Activated CD4-positive, alpha-beta memory T cell treated with anti-CD3 and anti-CD28 coated beads, Interleukin-2, amount 10 ng/mL, durations not matched to agents 7 days and 5 days (primary cell): ENCODE measurements at regions of chr9 and their contacts with region 1.

Region 1: DNA sequence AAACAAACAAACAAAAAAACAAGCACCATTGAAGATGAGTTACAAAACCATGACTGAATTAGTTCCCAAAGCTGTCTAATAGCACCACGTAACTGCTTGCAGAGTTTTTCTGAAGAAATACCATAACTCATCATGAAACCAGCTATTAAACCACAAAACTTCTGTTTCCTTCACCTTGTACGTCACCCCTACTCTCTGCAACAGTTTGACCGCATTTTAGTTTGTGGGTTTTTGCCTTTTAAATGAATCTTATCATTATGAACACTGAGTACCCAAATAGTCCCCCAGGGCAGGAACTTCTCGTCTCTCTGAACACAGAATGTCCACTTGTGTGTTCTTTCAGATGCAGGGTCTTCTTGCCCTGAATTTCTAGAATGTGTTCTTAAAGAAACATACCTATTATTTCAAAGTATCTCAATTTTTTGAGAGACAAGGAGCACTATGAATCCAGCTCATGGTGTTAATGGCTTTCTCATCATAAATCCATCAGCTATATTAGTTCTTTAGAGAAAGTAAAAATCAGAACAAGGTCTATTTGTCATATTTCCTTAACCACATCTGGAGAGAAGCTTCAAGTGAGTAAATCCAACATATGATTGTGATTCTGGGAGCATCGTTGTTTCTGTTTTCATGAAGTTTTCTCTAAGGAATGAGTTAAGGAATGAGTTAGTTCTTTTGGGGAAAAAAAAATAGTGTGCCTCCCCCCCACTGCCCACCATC is 210.6 kb downstream of the AUH start:
- DNase-seq: peak; percentile 65
- H3K4me3 Mint-ChIP-seq: peak overlapping the region; percentile 48
- H3K27ac Mint-ChIP-seq: peak overlapping the region; percentile 91
- H3K4me1 Mint-ChIP-seq: peaks cover 94% of the 10 kb centered on the region
- H3K27me3 Mint-ChIP-seq: no peaks in the 10 kb centered on the region

Region 2: GRCh38 chr9:91071185-91071990 is 79.8 kb before region 1 on chr9:
- CTCF ChIA-PET with region 1: no interaction called
- POLR2A ChIA-PET with region 1: interaction called, 27 read pairs
- DNase-seq: peak; percentile 83
- H3K4me3 Mint-ChIP-seq: peak overlapping the region; percentile 31
- H3K27ac Mint-ChIP-seq: peak overlapping the region; percentile 77
- H3K4me1 Mint-ChIP-seq: peaks cover 33% of the 10 kb centered on the region
- H3K27me3 Mint-ChIP-seq: no peaks in the 10 kb centered on the region

Region 3: GRCh38 chr9:91131433-91131839 is 19.7 kb before region 1 on chr9:
- CTCF ChIA-PET with region 1: interaction called, 22 read pairs
- POLR2A ChIA-PET with region 1: interaction called, 216 read pairs
- DNase-seq: peak; percentile 90
- H3K4me3 Mint-ChIP-seq: peak overlapping the region; percentile 62
- H3K27ac Mint-ChIP-seq: peak overlapping the region; percentile 99
- H3K4me1 Mint-ChIP-seq: peaks cover 61% of the 10 kb centered on the region
- H3K27me3 Mint-ChIP-seq: no peaks in the 10 kb centered on the region

Region 4: DNA sequence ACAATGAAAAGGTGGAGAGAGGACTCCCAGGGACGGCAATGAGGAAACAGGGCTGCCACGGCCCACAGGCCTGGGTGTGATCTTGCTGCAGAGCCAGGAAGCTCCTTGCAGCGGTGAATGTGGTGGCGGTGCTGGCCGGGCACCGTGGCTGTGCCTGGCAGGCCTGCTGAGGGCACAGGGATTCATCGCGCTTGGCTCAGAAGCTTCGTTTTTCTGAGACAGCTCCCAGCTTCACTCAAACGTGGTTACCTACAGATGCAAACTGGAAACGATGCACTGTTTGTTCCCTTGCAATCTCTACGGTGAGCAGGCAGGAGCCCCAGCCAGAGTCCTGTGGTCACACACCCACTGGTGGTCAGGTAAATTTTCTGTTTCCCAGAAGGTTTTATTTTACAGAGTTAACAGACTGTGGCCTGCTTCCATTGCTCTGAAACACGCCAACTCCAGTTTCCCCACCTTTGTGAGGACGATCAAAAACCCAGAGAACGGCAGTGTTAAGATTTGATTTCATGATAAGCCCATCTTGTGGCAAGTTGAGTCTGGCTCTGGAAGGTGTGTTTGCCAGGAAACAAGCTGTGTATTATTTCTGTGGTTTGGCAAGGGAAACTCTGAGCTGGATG is 26.6 kb after region 1 on chr9:
- CTCF ChIA-PET with region 1: interaction called, 3 read pairs
- POLR2A ChIA-PET with region 1: interaction called, 17 read pairs
- DNase-seq: peak; percentile 69
- H3K4me3 Mint-ChIP-seq: peak overlapping the region; percentile 40
- H3K27ac Mint-ChIP-seq: peak overlapping the region; percentile 92
- H3K4me1 Mint-ChIP-seq: peaks cover 64% of the 10 kb centered on the region
- H3K27me3 Mint-ChIP-seq: no peaks in the 10 kb centered on the region

Region 5: DNA sequence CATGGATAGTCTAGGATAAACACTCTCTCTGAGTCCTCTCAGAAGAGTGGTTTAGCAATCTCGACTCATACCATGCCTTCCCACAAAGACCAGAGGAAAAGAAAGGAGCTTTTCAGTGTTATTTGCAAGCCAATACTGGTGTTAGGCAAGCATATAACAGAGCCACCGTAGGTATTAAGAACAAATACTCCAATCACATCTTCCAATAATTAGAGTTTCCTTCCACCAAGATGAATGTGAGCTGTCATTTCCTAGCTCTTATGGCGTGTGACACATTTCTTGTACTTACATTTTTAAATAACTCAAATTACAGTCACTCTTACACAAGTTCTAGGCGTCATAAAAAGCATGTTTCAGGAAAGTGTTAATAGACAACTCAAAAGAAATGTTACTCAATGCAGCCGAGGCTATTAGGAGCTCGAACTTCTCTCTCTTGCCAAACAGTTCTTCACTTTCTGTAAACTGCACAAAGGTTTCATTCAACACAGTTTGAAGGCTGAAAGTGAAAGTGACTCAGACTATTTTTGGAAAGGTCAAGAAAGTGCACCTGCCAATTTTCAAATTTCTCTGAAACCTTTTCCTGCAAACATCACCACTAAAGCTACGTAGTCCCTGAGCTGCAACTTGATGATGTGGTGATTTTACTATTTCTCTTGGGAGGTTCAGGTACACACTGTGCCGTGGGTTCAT is 56.7 kb after region 1 on chr9:
- CTCF ChIA-PET with region 1: no interaction called
- POLR2A ChIA-PET with region 1: interaction called, 14 read pairs
- DNase-seq: no peak
- H3K4me3 Mint-ChIP-seq: peak overlapping the region; percentile 58
- H3K27ac Mint-ChIP-seq: peak overlapping the region; percentile 86
- H3K4me1 Mint-ChIP-seq: peaks cover 57% of the 10 kb centered on the region
- H3K27me3 Mint-ChIP-seq: no peaks in the 10 kb centered on the region

Region 6: GRCh38 chr9:91334053-91334452 is 182.9 kb after region 1 on chr9:
- CTCF ChIA-PET with region 1: no interaction called
- POLR2A ChIA-PET with region 1: no interaction called
- DNase-seq: no peak
- H3K4me3 Mint-ChIP-seq: no peak overlapping the region
- H3K27ac Mint-ChIP-seq: no peak overlapping the region
- H3K4me1 Mint-ChIP-seq: peaks cover 13% of the 10 kb centered on the region
- H3K27me3 Mint-ChIP-seq: no peaks in the 10 kb centered on the region

Region 7: GRCh38 chr9:91361291-91362050 is 210.3 kb after region 1 on chr9 and contains the start of gene AUH:
- CTCF ChIA-PET with region 1: interaction called, 10 read pairs
- POLR2A ChIA-PET with region 1: interaction called, 70 read pairs
- DNase-seq: peak; percentile 88
- H3K4me3 Mint-ChIP-seq: peak within 1 kb of the TSS; percentile 99
- H3K27ac Mint-ChIP-seq: peak within 1 kb of the TSS; percentile 94
- H3K4me1 Mint-ChIP-seq: peaks cover 55% of the 10 kb centered on the region
- H3K27me3 Mint-ChIP-seq: no peaks in the 10 kb centered on the region
- total RNA-seq, gene AUH: 34.8 to 39.3 TPM